MCF 10A (cell line): ENCODE measurements at regions of chr10 and their contacts with region 1.

Region 1: DNA sequence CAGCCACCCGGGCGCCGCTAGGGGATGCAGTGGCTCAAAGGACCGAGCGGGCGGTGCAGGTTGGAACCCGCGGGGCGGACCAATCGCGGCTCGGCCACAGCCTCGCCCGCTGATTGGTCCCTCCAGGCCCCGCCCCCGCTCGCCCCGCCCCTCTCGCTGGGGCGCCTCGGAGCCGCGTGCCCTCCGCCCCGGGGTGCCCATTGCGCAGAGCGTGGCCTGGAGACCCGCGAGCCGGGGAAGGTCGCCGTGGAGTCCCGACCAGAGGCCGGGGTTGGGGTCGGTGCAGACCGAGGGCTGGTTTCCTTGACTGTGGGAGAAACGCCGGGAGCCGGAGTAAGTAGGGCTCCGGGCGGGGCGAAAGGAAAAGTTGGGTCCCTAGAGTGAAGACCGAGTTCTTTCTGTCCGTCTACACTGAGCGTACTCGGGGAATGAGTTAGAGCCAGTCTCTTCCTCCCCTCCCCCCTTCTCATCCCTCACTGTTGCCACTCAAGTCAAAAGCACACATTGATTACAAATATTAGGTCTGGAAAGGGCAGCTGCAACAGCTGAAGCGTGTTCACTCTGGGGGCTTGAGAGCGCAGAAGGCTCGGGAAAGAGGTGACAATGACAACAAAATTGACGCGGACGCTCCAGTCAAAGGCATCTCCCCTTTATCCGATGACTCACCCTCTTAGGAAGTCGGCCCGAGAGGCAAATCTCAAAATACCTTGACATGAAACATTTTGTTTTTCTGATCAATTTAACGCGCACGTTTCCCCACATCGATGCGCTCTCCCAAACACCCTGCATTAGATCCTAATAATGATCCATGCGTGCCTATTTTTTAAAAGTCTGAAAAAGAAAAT is 820 bp upstream of the GATA3 start:
- DNase-seq: peak; percentile 88
- H3K4me3 Mint-ChIP-seq: peak overlapping the region; percentile 93
- H3K27ac Mint-ChIP-seq: no peak overlapping the region
- H3K4me1 Mint-ChIP-seq: peaks cover 8% of the 10 kb centered on the region
- H3K27me3 Mint-ChIP-seq: peaks cover 7% of the 10 kb centered on the region
- CTCF ChIP-seq: peak; percentile 87

Region 2: GRCh38 chr10:7826971-7827370 is 226.7 kb before region 1 on chr10:
- CTCF ChIA-PET with region 1: no interaction called
- POLR2A ChIA-PET with region 1: no interaction called
- intact Hi-C with region 1: no loop called
- DNase-seq: peak; percentile 35
- H3K4me3 Mint-ChIP-seq: no peak overlapping the region
- H3K27ac Mint-ChIP-seq: peak overlapping the region; percentile 42
- H3K4me1 Mint-ChIP-seq: peaks cover 2% of the 10 kb centered on the region
- H3K27me3 Mint-ChIP-seq: no peaks in the 10 kb centered on the region
- CTCF ChIP-seq: no peak

Region 3: DNA sequence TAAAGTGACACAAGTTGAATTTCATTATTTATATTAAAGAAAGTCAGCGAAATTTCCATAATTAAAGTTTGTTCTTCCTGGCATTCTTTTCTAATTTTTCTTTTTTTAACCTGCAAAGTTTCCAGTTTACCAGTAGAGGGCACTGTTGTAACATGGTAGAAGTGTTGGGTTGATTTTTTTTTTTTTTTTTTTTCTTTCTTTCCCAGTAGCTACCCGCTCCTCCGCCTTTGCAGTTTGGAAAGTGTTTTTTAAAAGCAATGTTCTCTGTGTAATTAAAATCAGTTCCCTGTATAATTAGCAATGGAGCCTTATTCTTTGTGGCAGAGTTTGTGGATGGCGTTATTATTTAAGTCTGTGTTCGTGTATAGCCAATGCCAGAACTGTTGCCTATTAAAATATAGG is 181.6 kb before region 1 on chr10:
- CTCF ChIA-PET with region 1: interaction called, 3 read pairs
- POLR2A ChIA-PET with region 1: interaction called, 3 read pairs
- intact Hi-C with region 1: loop called (anchors 1 kb)
- DNase-seq: peak; percentile 47
- H3K4me3 Mint-ChIP-seq: peak overlapping the region; percentile 78
- H3K27ac Mint-ChIP-seq: no peak overlapping the region
- H3K4me1 Mint-ChIP-seq: no peaks in the 10 kb centered on the region
- H3K27me3 Mint-ChIP-seq: no peaks in the 10 kb centered on the region
- CTCF ChIP-seq: peak; percentile 33

Region 4: DNA sequence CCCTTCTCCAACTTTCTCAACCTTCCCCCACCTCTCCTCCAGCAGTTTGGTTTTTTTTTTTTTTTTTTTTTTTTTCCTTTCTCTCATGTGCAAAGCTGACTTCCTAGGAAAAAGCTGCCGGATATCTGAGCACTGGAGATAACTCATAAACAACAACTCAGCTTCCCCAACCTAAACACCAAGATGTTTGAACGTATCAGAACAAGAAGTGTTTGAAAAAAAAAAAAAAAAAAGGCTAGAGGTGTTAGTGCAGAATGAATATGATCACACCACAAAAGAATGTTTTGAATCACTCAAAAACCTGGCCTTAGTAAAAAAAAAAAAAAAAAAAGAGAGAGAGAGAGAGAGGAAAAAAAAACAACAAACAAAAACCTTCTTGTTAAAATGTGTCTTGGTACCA is 12.0 kb after region 1 on chr10:
- CTCF ChIA-PET with region 1: interaction called, 10 read pairs
- POLR2A ChIA-PET with region 1: interaction called, 11 read pairs
- intact Hi-C with region 1: no loop called
- DNase-seq: peak; percentile 30
- H3K4me3 Mint-ChIP-seq: peak overlapping the region; percentile 6
- H3K27ac Mint-ChIP-seq: peak overlapping the region; percentile 81
- H3K4me1 Mint-ChIP-seq: peaks cover 33% of the 10 kb centered on the region
- H3K27me3 Mint-ChIP-seq: no peaks in the 10 kb centered on the region
- CTCF ChIP-seq: no peak

Region 5: DNA sequence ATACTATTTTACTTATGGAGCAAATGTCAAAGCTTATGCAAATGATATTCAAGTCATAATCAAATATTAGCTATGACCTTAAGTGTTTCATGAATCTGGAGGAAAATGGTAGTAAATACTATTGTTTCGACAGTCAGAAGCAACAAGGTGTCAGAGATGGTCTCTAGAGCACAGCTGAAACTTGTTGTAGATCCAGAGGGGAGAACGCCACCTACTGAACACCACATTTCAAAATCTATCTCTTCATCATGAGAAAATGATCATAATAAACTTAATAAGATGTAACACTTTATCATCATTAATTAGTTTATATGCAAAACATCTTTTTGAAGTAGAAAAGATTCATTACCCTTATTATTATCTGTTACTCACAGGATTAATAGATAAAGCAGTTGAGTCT is 419.5 kb after region 1 on chr10:
- CTCF ChIA-PET with region 1: no interaction called
- POLR2A ChIA-PET with region 1: no interaction called
- intact Hi-C with region 1: loop called (anchors 2 kb)
- DNase-seq: no peak
- H3K4me3 Mint-ChIP-seq: no peak overlapping the region
- H3K27ac Mint-ChIP-seq: no peak overlapping the region
- H3K4me1 Mint-ChIP-seq: no peaks in the 10 kb centered on the region
- H3K27me3 Mint-ChIP-seq: no peaks in the 10 kb centered on the region
- CTCF ChIP-seq: no peak

Region 6: DNA sequence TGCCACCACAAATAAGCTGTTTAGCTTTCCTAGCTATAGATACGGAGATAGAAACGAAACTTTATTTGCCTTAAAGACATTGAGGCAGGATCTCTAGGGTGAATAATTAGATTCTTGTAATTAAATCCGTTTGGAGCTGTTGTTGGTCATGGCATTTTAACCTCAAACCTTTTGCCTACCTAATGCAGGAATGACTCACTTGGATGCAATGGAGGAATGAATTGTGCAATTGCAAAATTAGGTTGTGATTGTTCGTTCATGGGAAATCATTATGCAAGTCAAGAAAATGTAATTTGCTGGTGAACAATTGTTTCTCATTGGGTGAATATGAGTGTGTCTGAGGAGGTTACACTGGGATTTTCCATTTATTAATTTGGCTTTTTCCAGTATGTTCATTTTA is 704.4 kb after region 1 on chr10:
- CTCF ChIA-PET with region 1: no interaction called
- POLR2A ChIA-PET with region 1: no interaction called
- intact Hi-C with region 1: loop called (anchors 10 kb)
- DNase-seq: peak; percentile 90
- H3K4me3 Mint-ChIP-seq: no peak overlapping the region
- H3K27ac Mint-ChIP-seq: no peak overlapping the region
- H3K4me1 Mint-ChIP-seq: peaks cover 11% of the 10 kb centered on the region
- H3K27me3 Mint-ChIP-seq: no peaks in the 10 kb centered on the region
- CTCF ChIP-seq: no peak

Region 7: GRCh38 chr10:8873310-8873709 is 819.6 kb after region 1 on chr10:
- CTCF ChIA-PET with region 1: interaction called, 4 read pairs
- POLR2A ChIA-PET with region 1: interaction called, 10 read pairs
- intact Hi-C with region 1: loop called (anchors 1 kb)
- DNase-seq: peak; percentile 29
- H3K4me3 Mint-ChIP-seq: no peak overlapping the region
- H3K27ac Mint-ChIP-seq: no peak overlapping the region
- H3K4me1 Mint-ChIP-seq: peaks cover 19% of the 10 kb centered on the region
- H3K27me3 Mint-ChIP-seq: no peaks in the 10 kb centered on the region
- CTCF ChIP-seq: peak; percentile 36

Region 8: DNA sequence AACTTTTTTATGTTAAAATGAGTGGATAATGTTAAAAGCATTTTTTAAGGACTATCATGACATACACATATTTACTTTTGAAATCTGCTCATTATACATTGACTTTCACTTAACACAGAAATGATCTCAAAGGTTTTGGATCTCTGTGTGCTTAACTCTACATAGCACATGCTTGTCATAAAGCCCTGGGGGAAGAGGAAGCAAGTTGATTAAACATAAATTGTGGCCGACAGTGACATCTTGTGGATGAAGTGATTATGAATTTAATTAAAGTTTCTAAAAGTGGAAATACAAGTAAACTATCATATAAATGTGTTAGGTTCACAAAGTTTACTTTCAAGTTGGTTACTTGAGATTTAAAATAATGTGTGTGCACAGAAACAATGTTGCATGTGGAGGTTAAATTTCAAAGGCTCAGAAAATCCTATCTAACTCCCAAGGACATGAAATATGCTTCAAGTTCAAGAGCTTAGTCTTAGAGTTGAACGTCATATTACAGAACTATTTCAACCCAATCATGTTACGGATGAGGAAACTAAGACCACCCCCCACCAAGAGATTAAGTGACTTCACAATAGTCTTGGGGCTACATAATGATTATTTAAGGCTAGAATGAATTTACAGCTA is 1248.6 kb after region 1 on chr10:
- CTCF ChIA-PET with region 1: no interaction called
- POLR2A ChIA-PET with region 1: interaction called, 3 read pairs
- intact Hi-C with region 1: loop called (anchors 1 kb)
- DNase-seq: peak; percentile 74
- H3K4me3 Mint-ChIP-seq: no peak overlapping the region
- H3K27ac Mint-ChIP-seq: no peak overlapping the region
- H3K4me1 Mint-ChIP-seq: no peaks in the 10 kb centered on the region
- H3K27me3 Mint-ChIP-seq: no peaks in the 10 kb centered on the region
- CTCF ChIP-seq: peak; percentile 38